Activated CD4-positive, alpha-beta T cell treated with anti-CD3 and anti-CD28 coated beads, Interleukin-2, amount 10 ng/mL, durations not matched to agents 7 days and 5 days (primary cell): ENCODE measurements at regions of chr16 and their contacts with region 1.

Region 1: GRCh38 chr16:4487955-4488498 is 11.8 kb downstream of the HMOX2 start:
- DNase-seq: no peak
- H3K4me3 Mint-ChIP-seq: peak overlapping the region; percentile 64
- H3K27ac Mint-ChIP-seq: peak overlapping the region; percentile 96
- H3K4me1 Mint-ChIP-seq: peaks cover 66% of the 10 kb centered on the region
- H3K27me3 Mint-ChIP-seq: no peaks in the 10 kb centered on the region

Region 2: DNA sequence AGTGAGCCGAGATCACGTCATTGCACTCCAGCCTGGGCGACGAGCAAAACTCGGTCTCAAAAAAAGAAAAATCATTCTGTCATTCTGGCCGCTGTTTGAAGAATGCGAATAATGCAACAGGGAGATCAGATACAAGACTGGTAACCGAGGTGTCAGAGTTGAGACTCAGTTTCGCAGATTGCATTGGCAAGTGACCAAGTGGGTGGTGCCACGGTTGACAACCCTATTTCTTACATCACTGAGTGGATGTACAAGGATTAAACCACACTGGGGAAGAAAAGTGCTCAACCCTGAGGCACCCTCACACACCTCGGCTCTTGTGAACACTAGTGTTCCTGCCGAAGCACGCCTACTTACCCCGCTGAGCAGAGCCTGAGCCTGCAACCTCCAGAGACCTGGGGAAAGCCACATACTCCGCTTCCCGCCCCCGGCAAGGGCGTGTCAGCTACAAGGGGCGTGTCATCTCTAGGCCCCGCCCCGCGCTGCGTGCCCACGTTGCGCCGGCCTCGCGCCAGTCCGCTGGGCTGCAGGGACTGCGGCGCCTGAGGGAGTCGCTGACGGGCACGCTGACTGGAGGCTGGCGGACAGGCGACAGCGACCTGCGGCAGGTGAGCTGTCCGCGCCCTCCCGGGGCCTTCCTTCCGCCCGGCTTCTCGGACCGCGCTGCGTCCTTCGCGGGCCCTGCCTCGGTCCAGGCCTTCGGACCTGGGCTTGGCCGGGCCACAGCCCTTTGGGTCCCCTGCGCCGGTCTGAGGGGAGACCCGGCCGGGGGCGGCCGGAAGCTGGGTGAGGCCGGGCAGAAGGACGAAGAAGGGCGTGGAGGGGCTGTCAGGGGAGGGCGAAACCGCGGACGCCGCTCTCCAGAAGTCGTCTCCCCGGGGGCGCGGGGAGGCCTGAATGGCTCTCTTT is 11.9 kb before region 1 on chr16 and contains the start of gene HMOX2:
- CTCF ChIA-PET with region 1: interaction called, 42 read pairs
- POLR2A ChIA-PET with region 1: interaction called, 3 read pairs
- DNase-seq: peak; percentile 92
- H3K4me3 Mint-ChIP-seq: peak within 1 kb of the TSS; percentile 94
- H3K27ac Mint-ChIP-seq: peak within 1 kb of the TSS; percentile 90
- H3K4me1 Mint-ChIP-seq: peaks cover 40% of the 10 kb centered on the region
- H3K27me3 Mint-ChIP-seq: no peaks in the 10 kb centered on the region
- total RNA-seq, gene HMOX2: 86.3 to 107 TPM